Posterior vena cava (tissue), 2 donors: ENCODE measurements at regions of chr5 and their contacts with region 1.

Region 1: GRCh38 chr5:20017021-20017420 is 29.0 kb upstream of the CDH18 start:
- DNase-seq: no peak

Region 2: DNA sequence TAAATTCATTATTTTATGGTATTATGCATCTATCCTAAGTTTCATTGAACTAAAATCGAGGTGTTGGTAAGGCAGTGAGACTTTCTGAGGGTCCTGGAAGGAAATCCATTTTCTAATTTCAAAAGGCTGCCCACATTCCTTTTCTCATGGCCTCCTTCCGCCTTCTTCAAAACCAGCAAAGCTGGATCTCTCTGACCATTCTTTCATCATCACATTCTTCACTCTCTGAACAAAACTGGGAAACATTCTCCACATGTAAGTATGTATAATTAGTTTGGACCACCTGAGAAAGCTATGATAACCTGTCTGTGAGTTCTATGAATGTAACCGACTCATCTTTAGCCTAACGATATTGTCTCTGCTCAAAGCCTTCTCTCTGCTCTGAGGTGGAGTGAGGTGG is 1619.5 kb after region 1 on chr5:
- intact Hi-C with region 1: loop called in 1 of 2 experiments (anchors 5 kb)
- DNase-seq: no peak